HAP-1 (cell line): ENCODE measurements at regions of chr4 and their contacts with region 1.

Region 1: DNA sequence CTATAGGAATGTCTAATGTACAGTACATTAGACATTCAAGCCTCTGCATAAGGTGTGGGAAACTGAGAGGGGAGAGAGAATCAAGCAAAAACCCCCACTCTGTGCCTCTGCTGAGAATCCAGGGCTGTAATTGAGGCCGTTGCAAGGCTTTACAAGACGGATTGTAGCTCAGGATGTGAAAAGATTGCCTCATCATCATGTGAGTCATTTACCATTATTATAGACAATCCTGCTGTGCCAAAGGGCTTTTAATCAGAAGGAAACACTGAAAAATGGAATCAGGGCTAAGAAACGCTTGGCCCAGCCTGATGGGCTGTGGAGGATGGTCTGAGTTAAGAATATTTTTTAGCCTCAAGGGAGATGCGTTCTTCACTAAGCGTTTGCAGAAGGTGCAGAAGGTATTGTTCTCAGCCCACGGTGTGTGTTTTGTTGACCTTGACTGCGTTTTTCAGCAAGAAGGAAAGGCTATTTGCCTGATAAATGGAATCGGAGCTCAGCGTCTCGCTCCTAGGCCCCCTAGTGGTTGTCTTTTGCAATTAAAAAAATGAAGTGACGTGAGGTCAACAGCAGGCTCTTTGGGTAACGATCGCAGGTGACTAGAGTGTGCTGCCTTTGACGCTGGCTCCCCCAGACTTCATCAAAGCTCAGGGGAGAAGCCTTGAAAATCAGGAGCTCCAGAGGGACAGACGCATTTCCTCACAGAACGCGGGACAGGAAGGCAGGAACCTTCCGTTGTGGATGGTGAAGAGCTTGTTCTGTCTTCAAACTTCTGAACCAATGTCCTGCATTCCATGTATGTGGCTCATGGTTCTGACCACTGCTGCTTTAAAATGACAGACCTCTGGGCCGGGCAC is 18.1 kb upstream of the CHRNA9 start:
- DNase-seq: peak; percentile 82 to 83
- H3K4me3 ChIP-seq: peak overlapping the region; percentile 2
- H3K4me1 ChIP-seq: peaks cover 27% of the 10 kb centered on the region
- H3K27me3 ChIP-seq: no peaks in the 10 kb centered on the region

Region 2: DNA sequence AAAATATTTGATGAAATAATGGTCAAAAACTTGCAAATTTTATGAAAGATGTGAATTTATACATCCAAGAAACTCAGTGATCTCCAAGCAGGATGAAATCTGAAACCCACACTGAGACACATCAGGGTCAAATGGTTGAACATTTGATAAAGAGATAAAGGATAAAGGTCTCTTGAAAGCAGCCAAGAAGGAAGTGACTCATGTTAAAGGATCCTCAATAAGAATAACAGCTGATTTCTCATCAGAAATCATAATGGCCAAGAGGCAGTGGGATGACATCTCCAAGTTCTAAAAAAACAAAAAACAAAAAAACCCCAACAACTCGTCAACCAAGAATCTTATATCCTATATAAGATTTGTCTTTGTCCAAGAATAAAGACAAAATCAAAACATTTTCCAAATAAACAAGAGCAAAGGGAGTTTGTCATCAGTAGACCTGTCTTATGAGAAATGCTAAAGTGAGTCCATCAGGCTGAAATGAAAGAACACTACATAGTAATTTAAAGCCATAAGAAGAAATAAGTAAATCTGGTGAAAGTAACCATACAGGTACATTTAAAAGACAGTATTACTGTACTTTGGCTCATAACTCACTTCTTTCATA is 461.0 kb before region 1 on chr4:
- in situ Hi-C with region 1: no loop called
- DNase-seq: no peak
- H3K4me3 ChIP-seq: no peak overlapping the region
- H3K4me1 ChIP-seq: no peaks in the 10 kb centered on the region
- H3K27me3 ChIP-seq: no peaks in the 10 kb centered on the region

Region 3: DNA sequence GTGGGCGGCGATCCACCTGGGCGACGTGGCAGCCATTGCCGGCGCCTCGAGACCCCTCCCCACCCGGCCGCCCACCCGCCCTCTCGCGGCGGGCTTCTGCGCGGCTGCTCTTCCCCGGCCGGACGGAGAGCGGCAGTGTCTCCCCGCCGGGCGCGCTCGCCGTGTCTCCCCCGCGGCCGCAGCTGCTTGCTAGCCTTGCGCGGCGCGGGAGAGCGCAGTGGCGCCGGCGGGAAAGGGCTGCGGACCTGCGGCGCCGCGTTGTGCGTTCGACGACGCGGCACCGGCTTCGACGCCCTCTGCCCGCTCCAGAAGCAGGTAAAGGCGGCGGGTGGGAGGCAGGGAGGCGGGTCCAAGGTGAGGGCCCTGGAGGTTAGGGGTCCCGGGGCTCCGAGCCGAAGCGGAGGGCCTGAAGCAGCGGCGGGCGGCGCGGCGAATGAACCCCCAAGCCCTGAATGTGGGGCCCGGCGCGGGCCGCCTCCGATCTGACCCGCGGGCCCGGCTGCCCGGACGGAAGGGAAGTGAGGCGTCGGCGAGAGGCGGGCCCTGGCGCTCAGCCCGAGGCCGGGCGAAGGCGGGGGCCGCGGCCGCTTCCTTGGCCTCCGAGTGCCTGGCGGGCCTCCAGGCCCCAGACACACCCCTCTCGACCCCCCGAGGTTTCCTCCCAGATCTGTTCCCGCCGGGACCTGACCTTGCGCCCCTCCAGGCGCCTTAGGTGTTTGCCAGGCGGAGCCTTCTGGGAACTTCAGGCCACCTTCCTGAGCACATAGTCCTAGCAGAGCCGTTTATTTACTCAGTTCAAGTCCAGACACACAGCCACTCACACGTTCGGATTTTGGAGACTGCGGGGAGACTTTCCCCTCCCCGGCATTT is 260.1 kb before region 1 on chr4 and contains the start of gene N4BP2:
- in situ Hi-C with region 1: loop called (anchors 10 kb)
- DNase-seq: peak; percentile 72 to 84
- H3K4me3 ChIP-seq: peak within 1 kb of the TSS; percentile 53
- H3K4me1 ChIP-seq: peaks cover 17% of the 10 kb centered on the region
- H3K27me3 ChIP-seq: no peaks in the 10 kb centered on the region

Region 4: DNA sequence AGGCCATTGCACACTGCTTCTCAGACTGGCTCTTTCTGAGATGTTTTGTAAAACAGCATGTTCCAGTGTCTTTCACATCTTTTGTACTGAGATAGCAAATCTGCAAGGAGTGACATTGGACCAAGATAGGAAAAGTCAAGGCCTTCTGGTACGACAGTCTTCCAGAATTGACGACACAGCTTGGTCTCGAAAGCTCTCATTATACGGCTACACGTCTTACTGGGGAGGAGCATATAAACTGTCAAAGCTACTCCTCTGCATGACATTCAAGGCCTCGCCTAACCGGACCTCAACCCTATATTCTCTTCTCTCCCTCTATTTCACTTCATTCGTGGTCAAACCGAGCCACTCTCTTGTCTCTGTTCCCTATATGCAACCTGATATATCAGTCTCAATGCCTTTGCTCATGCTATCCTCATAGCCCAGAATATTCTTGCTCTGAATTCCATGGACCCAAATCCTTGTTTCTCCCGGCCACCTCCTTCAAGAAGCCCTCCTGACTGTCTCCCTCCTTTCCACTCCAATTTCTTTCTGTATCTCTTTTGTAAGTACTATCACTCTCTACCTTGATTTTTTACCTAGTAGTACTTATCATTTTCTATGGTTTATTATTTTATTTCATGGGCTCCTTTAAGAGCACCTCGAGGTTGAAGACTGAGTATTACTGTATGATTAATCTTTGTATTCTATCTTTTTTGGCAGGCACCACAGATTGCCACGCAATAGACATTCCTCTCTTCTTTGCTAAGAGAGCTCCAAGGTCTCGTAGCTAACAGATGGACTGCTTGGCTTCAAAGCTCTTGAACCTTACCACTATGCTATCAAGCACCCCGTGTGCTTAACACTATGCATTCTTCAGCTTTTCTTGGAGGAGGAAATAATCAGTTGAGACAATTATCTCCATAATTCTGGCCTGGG is 277.5 kb after region 1 on chr4:
- in situ Hi-C with region 1: no loop called
- DNase-seq: no peak
- H3K4me3 ChIP-seq: no peak overlapping the region
- H3K4me1 ChIP-seq: peaks cover 7% of the 10 kb centered on the region
- H3K27me3 ChIP-seq: no peaks in the 10 kb centered on the region